Activated CD4-positive, alpha-beta memory T cell treated with anti-CD3 and anti-CD28 coated beads for 36 hours (primary cell): ENCODE measurements at regions of chr11 and their contacts with region 1.

Region 1: DNA sequence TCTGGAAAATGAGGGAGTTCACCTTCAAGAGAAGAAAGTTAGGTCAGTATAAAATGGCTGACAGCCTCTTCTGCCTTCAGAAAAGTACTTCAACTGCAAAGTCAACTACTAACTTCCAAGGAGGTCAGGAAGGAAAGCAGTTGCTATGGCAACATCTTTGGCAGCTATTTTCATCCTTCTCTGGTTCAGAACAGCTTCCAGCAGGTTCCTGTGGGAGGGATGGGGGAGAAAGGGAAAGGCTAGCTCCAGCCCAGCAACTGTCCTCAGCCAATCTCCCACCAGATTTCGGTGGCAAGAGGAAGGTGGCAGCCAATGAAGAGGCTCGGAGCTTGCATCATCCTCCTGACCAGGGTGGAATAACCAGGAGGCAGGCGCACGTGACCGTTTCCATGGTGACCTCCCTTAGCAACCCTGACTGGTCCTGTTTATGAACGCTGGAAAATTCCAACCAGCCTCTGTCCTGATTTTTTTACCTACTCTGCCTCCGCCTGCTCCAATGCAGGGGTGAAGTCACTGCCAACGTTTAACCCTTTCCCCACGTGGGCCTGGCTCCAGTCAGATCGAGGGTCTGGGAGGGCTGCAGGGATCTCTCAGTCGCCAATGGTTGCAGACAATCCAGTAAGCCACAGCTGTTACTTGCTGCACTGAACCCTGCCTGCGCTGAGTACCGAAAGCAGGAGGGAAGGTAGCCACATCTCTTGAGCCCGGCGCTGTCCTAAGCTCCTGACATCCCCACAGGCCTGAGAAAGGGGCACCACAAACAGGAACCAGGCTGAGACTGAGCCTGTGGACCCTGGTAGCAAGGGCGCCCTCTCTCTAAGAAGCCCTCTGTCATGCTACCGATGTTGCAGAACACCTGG is 11.2 kb upstream of the MALAT1 start:
- DNase-seq: peak; percentile 71
- H3K4me3 Mint-ChIP-seq: no peak overlapping the region
- H3K27ac Mint-ChIP-seq: peak overlapping the region; percentile 67
- H3K4me1 Mint-ChIP-seq: peaks cover 39% of the 10 kb centered on the region
- H3K27me3 Mint-ChIP-seq: no peaks in the 10 kb centered on the region

Region 2: DNA sequence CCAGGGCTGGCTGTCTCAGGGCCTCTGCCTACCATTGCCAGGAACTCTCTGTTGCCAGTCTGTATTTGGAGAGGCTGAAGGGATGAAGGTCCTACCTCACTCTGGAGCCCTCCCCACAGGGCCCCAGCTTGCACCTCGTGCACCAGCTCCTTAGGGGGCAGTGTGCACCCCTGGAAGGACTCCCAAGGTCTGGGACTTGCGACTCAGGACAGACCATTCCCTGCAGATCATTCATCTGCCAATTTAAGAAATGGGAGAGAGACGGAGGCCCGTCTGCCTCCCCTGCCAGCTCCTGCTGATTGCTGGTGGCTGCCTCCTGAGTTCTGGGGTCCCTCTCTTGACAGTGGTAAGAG is 16.3 kb before region 1 on chr11:
- CTCF ChIA-PET with region 1: interaction called, 14 read pairs
- POLR2A ChIA-PET with region 1: interaction called, 824 read pairs
- intact Hi-C with region 1: no loop called
- DNase-seq: no peak
- H3K4me3 Mint-ChIP-seq: peak overlapping the region; percentile 67
- H3K27ac Mint-ChIP-seq: peak overlapping the region; percentile 99
- H3K4me1 Mint-ChIP-seq: peaks cover 29% of the 10 kb centered on the region
- H3K27me3 Mint-ChIP-seq: no peaks in the 10 kb centered on the region

Region 3: DNA sequence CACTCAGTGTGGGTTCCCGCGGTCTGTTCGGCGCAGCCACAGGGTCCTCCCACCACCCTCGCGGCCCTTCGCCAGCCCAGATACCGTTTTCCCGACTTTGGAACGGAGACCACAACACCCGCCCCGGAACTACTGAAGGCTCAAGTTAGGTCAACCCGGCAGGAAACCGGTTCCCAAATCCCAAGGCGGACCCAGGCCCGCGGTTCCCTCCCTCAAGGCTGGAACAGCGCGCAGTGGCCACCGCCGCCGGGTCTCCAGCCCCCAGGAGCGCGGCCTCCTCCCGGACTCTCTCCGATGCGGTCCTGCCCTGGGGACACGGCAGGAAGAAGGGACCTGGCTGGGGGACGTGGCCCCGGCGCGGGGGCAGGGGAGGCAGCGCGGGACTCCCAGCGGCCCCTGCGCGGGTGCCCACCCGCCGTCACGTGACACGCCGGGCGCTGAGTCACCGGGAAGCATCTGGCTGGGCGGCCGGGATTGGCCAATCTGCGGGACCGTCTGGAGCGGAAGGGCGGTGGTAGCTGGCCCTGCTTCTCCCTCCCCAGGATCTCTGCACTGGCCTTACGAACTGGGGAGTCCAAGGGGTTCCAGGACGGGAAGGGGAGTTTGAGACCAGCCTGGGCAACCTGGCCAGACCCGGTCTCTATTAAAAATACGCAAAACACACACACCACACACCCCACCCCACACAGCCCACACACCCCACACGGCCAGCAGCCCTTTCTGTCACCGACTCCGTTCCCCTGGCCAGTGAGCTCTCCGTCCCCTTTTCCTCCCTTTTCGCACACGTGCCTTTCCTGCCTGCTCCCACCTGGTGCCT is 10.3 kb before region 1 on chr11:
- CTCF ChIA-PET with region 1: interaction called, 14 read pairs
- POLR2A ChIA-PET with region 1: interaction called, 824 read pairs
- intact Hi-C with region 1: loop called (anchors 1 kb)
- DNase-seq: peak; percentile 96
- H3K4me3 Mint-ChIP-seq: peak overlapping the region; percentile 91
- H3K27ac Mint-ChIP-seq: peak overlapping the region; percentile 95
- H3K4me1 Mint-ChIP-seq: peaks cover 19% of the 10 kb centered on the region
- H3K27me3 Mint-ChIP-seq: no peaks in the 10 kb centered on the region

Region 4: GRCh38 chr11:65606876-65607613 is 119.4 kb after region 1 on chr11:
- CTCF ChIA-PET with region 1: no interaction called
- POLR2A ChIA-PET with region 1: no interaction called
- intact Hi-C with region 1: no loop called
- DNase-seq: no peak
- H3K4me3 Mint-ChIP-seq: no peak overlapping the region
- H3K27ac Mint-ChIP-seq: no peak overlapping the region
- H3K4me1 Mint-ChIP-seq: peaks cover 28% of the 10 kb centered on the region
- H3K27me3 Mint-ChIP-seq: no peaks in the 10 kb centered on the region

Region 5: GRCh38 chr11:65652511-65653231 is 165.0 kb after region 1 on chr11:
- CTCF ChIA-PET with region 1: no interaction called
- POLR2A ChIA-PET with region 1: no interaction called
- intact Hi-C with region 1: no loop called
- DNase-seq: peak; percentile 97
- H3K4me3 Mint-ChIP-seq: peak overlapping the region; percentile 77
- H3K27ac Mint-ChIP-seq: peak overlapping the region; percentile 93
- H3K4me1 Mint-ChIP-seq: peaks cover 51% of the 10 kb centered on the region
- H3K27me3 Mint-ChIP-seq: no peaks in the 10 kb centered on the region